SK-N-SH (cell line): ENCODE measurements at regions of chr11 and their contacts with region 1.

Region 1: DNA sequence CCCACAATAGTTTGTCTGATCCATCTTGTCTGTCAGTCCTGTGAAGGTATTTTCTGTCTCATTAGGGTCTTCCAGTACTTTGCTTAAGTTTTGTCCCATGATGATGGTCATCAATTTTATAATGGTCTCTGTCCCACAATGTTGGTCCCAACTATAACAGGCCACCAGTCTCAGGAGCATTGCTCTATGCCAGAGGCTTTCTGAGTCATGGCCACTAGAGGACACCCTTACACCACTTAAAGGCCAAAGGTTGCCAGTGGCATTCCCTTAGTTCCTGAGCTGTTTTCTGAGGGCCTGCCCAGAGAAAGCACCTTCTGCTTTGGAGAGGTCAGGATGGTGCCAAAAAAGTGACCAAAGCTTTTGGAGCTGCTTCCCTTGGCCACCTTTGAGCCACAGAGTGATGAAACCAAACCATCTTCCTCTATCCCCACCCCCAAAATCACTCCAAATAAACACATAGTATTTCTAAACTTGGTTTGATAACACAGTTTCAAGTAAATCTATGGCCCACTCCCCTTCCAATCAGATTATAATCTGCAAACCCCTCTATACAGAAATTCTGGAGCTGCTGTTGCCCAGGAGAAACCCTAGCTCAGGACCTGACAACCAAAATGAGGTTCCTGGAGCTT is 19.3 kb downstream of the EIF3F start:
- DNase-seq: peak; percentile 77
- H3K4me3 ChIP-seq: peak overlapping the region in 1 of 2 experiments; percentile 16; a peak in 1 of 4 replicates
- H3K27ac ChIP-seq: no peak overlapping the region
- H3K4me1 ChIP-seq: no peaks in the 10 kb centered on the region
- H3K27me3 ChIP-seq: no peaks in the 10 kb centered on the region
- CTCF ChIP-seq: peak; percentile 94
- EP300 ChIP-seq: no peak
- RAD21 ChIP-seq: peak; percentile 100

Region 2: DNA sequence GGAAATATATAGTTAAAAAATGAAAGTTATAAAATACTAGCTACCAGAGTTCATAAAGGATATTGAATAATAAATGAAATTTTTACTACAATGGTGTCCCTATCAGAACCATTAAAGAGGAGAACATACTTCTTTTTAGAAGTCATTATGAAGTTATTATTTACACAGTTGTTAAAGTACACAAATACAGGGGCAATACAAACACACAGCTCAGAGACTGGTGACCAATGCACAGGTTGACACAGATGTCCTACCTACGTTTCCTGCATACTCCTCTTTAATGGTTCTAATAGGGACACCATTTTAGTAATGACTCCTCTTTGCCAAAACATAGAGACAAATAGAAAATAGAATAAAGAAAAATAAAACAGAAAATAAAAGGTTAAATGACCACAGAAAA is 51.3 kb before region 1 on chr11:
- CTCF ChIA-PET with region 1: no interaction called
- POLR2A ChIA-PET with region 1: no interaction called
- DNase-seq: no peak
- H3K4me3 ChIP-seq: no peak overlapping the region
- H3K27ac ChIP-seq: no peak overlapping the region
- H3K4me1 ChIP-seq: no peaks in the 10 kb centered on the region
- H3K27me3 ChIP-seq: no peaks in the 10 kb centered on the region
- CTCF ChIP-seq: no peak
- EP300 ChIP-seq: no peak
- RAD21 ChIP-seq: no peak

Region 3: DNA sequence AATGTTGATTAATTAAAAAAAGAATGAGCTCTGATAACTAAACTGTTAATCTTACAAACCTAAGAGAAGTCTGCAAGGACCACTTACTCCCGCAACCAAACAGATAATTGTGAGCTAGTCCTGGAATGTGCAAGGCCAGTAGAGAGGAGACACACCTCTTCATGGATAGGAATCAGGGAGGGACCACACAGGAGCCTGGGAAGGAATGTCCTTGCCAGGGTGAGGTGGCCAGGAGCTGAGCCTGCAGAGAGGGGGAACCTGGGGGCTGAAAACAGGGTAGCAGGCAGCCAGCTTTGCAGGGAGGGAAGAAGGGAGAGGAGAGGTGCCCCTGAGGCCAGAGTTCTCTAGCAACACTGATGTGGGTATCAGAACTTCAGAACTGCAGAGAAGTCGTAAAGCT is 31.8 kb before region 1 on chr11:
- CTCF ChIA-PET with region 1: no interaction called
- POLR2A ChIA-PET with region 1: no interaction called
- DNase-seq: no peak
- H3K4me3 ChIP-seq: no peak overlapping the region
- H3K27ac ChIP-seq: no peak overlapping the region
- H3K4me1 ChIP-seq: no peaks in the 10 kb centered on the region
- H3K27me3 ChIP-seq: no peaks in the 10 kb centered on the region
- CTCF ChIP-seq: no peak
- EP300 ChIP-seq: no peak
- RAD21 ChIP-seq: no peak

Region 4: GRCh38 chr11:7986768-7987559 is 19.5 kb before region 1 on chr11 and contains the start of gene EIF3F:
- CTCF ChIA-PET with region 1: interaction called, 17 read pairs
- POLR2A ChIA-PET with region 1: no interaction called
- DNase-seq: peak; percentile 93
- H3K4me3 ChIP-seq: peak within 1 kb of the TSS; percentile 88 to 96
- H3K27ac ChIP-seq: peak within 1 kb of the TSS in 1 of 2 experiments; percentile 52; a peak in 3 of 4 replicates
- H3K4me1 ChIP-seq: peaks cover 7 to 12% of the 10 kb centered on the region in 2 experiments
- H3K27me3 ChIP-seq: no peaks in the 10 kb centered on the region
- CTCF ChIP-seq: peak; percentile 91
- EP300 ChIP-seq: peak; percentile 30 to 46; a peak in 3 of 4 replicates
- RAD21 ChIP-seq: peak; percentile 76
- polyA plus RNA-seq, gene EIF3F: 213 and 341 TPM in 2 replicates

Region 5: DNA sequence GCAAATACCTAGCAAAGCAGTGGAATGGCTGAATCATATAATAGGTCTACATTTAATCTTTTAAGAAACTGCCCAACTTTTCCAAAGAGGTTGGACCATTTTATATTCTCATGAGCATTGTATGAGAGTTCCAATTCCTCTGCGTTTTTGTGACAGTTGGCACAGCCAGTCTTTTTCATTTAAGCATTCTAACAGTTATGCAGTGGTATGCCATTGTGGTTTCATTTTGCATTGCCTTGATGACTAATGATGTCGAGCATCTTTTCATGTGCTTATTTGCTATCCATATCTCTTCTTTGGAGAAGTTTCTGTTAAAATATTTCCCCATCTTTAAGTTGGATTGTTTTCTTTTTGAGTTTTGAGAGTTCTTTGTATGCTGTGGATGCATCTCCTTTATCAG is 19.4 kb after region 1 on chr11:
- CTCF ChIA-PET with region 1: interaction called, 18 read pairs
- POLR2A ChIA-PET with region 1: no interaction called
- DNase-seq: no peak
- H3K4me3 ChIP-seq: peak overlapping the region in 1 of 2 experiments; percentile 13; a peak in 2 of 4 replicates
- H3K27ac ChIP-seq: peak overlapping the region; percentile 47 to 59; a peak in 3 of 4 replicates
- H3K4me1 ChIP-seq: peaks cover 0 to 4% of the 10 kb centered on the region in 2 experiments; a peak in 1 of 4 replicates
- H3K27me3 ChIP-seq: no peaks in the 10 kb centered on the region
- CTCF ChIP-seq: no peak
- EP300 ChIP-seq: peak in 1 of 2 experiments; percentile 67; a peak in 1 of 4 replicates
- RAD21 ChIP-seq: no peak

Region 6: DNA sequence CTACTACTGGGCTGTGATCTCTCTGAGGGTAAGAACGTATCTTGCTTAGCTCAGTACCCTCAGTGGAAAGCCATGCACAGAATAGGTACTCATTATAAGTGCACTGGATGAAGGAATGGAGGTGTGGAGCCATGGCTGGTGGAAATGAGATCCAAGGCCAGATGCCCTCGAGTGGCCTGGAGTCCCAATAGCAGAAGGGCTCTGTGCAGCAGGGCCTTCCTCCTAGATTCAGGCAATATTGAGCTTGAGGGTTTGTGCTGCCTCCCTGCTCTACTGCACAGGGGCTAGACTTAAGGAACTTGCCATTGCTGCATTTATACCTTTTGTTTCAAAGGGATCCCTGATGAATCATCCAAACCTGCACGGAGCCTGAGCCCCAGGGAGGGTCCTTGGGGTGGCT is 40.9 kb after region 1 on chr11:
- CTCF ChIA-PET with region 1: interaction called, 10 read pairs
- POLR2A ChIA-PET with region 1: no interaction called
- DNase-seq: no peak
- H3K4me3 ChIP-seq: no peak overlapping the region
- H3K27ac ChIP-seq: no peak overlapping the region
- H3K4me1 ChIP-seq: no peaks in the 10 kb centered on the region; a peak in 1 of 4 replicates
- H3K27me3 ChIP-seq: no peaks in the 10 kb centered on the region
- CTCF ChIP-seq: no peak
- EP300 ChIP-seq: no peak
- RAD21 ChIP-seq: no peak

Region 7: DNA sequence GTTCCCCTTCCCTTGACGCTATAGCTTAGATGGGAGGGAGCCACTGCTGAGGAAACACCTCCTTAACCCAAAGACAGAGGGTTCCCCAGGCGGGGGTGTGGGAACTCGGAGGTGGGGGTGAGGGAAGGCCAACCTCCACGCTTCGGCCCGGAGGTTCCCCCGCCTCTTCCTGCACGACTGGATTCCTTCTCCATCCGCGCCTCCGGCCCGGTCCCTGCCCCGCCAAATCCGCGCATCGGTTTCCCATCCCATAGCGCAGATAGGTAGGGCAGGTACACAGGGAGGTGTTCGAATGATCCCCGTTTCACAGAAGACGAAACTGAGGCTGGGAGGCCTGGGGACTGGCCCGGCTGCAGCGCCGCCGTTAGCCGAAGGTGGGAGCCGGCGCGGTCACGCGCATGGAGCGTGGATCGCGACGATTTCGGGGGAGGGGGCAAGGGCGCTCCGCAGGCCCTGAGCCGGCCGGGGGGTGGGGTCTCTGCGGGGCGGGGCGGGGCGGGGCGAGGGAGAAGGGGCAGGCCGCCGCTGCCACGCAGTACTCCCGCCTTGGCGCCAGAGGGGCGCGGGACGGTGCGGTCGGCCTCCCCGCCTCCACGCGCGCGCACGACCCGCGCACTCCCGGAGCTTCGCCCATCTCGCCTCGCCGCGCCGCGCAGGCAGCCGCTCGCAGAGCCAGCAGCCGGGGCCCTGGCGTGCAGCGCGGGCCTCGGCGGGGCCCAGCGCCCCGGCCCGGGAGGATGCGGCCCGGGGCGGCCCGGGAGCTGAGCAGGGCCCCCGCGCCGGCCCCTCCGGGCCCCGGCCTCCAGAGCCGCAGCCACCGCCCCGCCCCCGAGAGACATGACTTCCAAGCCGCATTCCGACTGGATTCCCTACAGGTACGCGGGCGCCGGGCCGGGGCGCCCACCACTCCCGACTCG is 74.5 kb after region 1 on chr11 and contains the start of gene TUB:
- CTCF ChIA-PET with region 1: interaction called, 574 read pairs
- POLR2A ChIA-PET with region 1: interaction called, 5 read pairs
- DNase-seq: peak; percentile 97
- H3K4me3 ChIP-seq: peak within 1 kb of the TSS; percentile 67 to 73
- H3K27ac ChIP-seq: peak within 1 kb of the TSS in 1 of 2 experiments; percentile 92; a peak in 2 of 4 replicates
- H3K4me1 ChIP-seq: peaks cover 18 to 52% of the 10 kb centered on the region in 2 experiments; a peak in 3 of 4 replicates
- H3K27me3 ChIP-seq: no peaks in the 10 kb centered on the region
- CTCF ChIP-seq: no peak
- EP300 ChIP-seq: no peak
- RAD21 ChIP-seq: no peak
- polyA plus RNA-seq, gene TUB: 11.3 and 16.9 TPM in 2 replicates

Region 8: GRCh38 chr11:8111636-8112035 is 105.2 kb after region 1 on chr11:
- CTCF ChIA-PET with region 1: interaction called, 574 read pairs
- POLR2A ChIA-PET with region 1: no interaction called
- DNase-seq: no peak
- H3K4me3 ChIP-seq: no peak overlapping the region
- H3K27ac ChIP-seq: peak overlapping the region in 1 of 2 experiments; percentile 64; a peak in 2 of 4 replicates
- H3K4me1 ChIP-seq: peaks cover 0 to 13% of the 10 kb centered on the region in 2 experiments; a peak in 2 of 4 replicates
- H3K27me3 ChIP-seq: no peaks in the 10 kb centered on the region
- CTCF ChIP-seq: no peak
- EP300 ChIP-seq: no peak
- RAD21 ChIP-seq: no peak

Region 9: DNA sequence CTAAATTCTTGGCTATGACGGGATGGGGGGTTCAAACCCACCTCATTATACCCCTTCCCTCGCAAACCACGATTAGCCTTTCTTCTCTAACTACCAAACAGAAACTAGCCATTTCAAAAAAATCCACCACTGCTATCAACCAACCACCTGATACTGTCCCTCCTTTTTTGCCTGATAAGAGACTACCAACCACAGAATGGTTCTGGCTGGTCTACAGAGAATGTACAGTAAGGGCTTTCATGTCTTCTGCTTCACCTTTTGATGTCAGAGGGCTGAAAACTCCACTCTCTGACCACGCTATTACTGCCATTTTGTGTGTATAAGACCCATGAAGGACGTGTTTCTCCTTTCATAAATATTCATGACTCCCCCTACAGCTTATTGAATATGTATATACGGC is 143.3 kb after region 1 on chr11:
- CTCF ChIA-PET with region 1: no interaction called
- POLR2A ChIA-PET with region 1: no interaction called
- DNase-seq: no peak
- H3K4me3 ChIP-seq: no peak overlapping the region
- H3K27ac ChIP-seq: no peak overlapping the region
- H3K4me1 ChIP-seq: no peaks in the 10 kb centered on the region
- H3K27me3 ChIP-seq: peaks cover 5% of the 10 kb centered on the region
- CTCF ChIP-seq: no peak
- EP300 ChIP-seq: no peak
- RAD21 ChIP-seq: no peak